GM18951 (cell line): ENCODE measurements at regions of chr6 and their contacts with region 1.

Region 1: GRCh38 chr6:157756708-157757429 is 66.2 kb upstream of the SNX9 start:
- POLR2A ChIP-seq: no peak

Region 2: DNA sequence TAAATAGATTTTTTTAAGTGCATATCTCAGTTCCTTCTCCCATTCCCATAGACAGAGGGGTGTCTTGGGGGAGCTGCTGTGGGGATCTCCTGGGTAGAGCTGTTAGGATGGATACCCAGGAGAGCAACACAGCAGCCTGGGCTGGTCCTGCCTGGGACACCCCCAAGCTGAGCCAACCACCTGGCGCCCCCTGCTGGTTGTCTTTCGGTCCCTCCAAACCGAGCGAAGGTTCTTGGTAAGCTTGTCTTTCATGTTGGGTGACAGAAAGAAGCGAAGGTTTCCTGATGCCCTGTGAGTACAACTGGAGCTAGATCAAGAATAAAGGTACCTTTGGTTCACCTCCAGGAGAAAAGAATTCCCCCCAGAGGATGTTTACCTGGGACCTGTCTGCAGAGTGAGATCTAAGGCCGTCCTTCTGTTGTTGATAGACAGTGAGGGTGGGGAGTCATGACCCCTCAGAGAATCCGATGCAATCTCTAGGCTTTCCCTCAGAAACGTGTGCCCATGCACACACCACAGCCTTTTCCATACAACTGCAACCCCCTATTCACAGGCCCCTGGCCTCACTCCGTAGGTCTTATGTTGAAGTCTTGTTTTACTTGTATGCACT is 117.0 kb after region 1 on chr6:
- in situ Hi-C with region 1: loop called (anchors 5 kb)
- POLR2A ChIP-seq: no peak